Heart right ventricle (tissue), 16 donors: ENCODE measurements at regions of chr1 and their contacts with region 1.

Region 1: DNA sequence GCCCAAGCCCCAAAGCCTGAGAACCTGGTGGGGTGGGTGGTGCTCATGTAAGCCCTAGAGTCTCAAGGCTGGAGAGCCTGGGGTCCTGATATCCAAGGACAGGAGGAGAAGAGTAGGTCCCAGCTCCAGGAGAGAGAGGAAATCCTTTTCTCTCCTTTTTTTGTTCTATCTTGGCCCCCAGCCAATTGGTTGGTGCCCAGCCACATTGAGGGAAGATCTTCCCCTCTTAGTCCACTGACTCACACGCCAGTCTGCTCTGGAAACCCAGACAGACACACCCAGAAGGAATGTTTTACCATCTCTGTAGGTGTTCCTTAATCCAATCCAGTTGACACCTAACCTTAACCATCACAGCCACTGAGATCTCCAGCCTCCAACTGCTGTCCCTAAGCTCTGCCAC is 16.2 kb upstream of the LIN9 start:
- DNase-seq: no peak
- ATAC-seq: no peak
- H3K4me3 ChIP-seq: no peak overlapping the region
- H3K27ac ChIP-seq: no peak overlapping the region
- H3K4me1 ChIP-seq: no peaks in the 10 kb centered on the region
- H3K27me3 ChIP-seq: peaks cover 0 to 7% (median 0%) of the 10 kb centered on the region in 7 donors
- CTCF ChIP-seq: no peak

Region 2: DNA sequence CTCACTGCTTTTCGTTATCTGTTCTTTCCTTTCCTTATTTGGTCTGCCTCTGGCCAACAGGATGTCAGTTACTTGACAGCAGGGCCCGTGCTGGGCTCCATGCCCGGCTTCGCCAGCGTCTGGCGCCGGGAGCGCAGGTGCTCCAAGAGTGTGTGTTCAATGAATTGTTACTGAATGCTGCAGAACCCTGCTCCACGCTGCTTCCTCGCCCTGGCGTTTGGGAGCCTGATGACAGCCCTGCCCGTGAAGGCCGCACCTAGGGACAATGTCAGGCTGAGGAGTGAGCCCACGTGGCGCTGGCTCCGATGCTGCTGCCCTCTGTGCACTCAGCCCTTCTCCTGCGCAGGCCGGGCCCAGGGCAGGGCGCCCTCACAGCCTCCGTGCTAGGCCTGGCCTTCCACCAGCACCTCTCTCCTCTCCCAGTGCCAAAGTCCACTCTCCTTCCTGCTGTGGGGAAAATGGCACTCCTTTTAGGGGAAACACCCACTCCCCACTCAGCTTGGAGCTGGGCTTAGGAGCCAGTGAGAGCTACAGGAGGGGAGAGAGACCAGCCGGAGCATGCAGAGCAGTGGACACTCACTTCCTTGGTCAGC is 190.0 kb before region 1 on chr1:
- intact Hi-C with region 1: loop called in 2 of 10 experiments (anchors 10 kb)
- DNase-seq: peak in 1 of 2 donors; percentile 61
- ATAC-seq: peak; percentile 61 to 83 (median 73)
- H3K4me3 ChIP-seq: peak overlapping the region in 2 of 10 donors; percentile 9 to 27
- H3K27ac ChIP-seq: no peak overlapping the region
- H3K4me1 ChIP-seq: peaks cover 0 to 16% (median 8%) of the 10 kb centered on the region in 9 donors
- H3K27me3 ChIP-seq: no peaks in the 10 kb centered on the region
- CTCF ChIP-seq: no peak

Region 3: DNA sequence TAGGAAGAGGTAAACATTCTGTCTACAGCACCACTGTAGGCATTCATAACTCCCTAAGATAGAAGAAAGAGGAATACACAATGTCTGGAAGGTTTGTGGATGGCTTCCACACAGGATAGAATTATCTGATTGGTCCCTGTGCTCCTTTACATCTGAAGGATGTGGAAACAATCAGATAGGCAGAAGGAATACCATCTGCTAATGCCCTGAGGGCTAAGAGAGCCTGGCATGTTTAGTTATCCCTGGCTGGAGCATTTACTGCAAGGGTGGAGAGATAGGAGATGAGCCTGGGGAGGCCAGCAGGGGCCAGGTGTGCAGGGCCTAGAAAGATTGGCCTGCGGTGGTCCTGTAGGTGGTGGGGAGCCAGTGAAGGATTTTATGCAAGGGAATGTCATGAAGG is 130.0 kb before region 1 on chr1:
- intact Hi-C with region 1: loop called in 2 of 10 experiments (anchors 10 kb)
- DNase-seq: no peak
- ATAC-seq: no peak
- H3K4me3 ChIP-seq: no peak overlapping the region
- H3K27ac ChIP-seq: no peak overlapping the region
- H3K4me1 ChIP-seq: peaks cover 0 to 4% (median 0%) of the 10 kb centered on the region in 9 donors
- H3K27me3 ChIP-seq: peaks cover 0 to 8% (median 0%) of the 10 kb centered on the region in 7 donors
- CTCF ChIP-seq: no peak

Region 4: GRCh38 chr1:226201029-226201593 is 124.1 kb before region 1 on chr1:
- intact Hi-C with region 1: loop called in 2 of 10 experiments (anchors 10 kb)
- DNase-seq: no peak
- ATAC-seq: no peak
- H3K4me3 ChIP-seq: no peak overlapping the region
- H3K27ac ChIP-seq: no peak overlapping the region
- H3K4me1 ChIP-seq: peaks cover 0 to 4% (median 0%) of the 10 kb centered on the region in 9 donors
- H3K27me3 ChIP-seq: peaks cover 0 to 21% (median 0%) of the 10 kb centered on the region in 7 donors
- CTCF ChIP-seq: peak in 2 of 9 donors; percentile 15 to 34

Region 5: GRCh38 chr1:226223786-226224244 is 101.4 kb before region 1 on chr1:
- intact Hi-C with region 1: loop called in 1 of 10 experiments (anchors 5 kb)
- DNase-seq: no peak
- ATAC-seq: peak in 4 of 8 donors; percentile 33 to 45 (median 39)
- H3K4me3 ChIP-seq: peak overlapping the region in 9 of 10 donors; percentile 40 to 57 (median 55)
- H3K27ac ChIP-seq: no peak overlapping the region
- H3K4me1 ChIP-seq: peaks cover 0 to 10% (median 4%) of the 10 kb centered on the region in 9 donors
- H3K27me3 ChIP-seq: peaks cover 0 to 38% (median 11%) of the 10 kb centered on the region in 7 donors
- CTCF ChIP-seq: no peak